ENCODE measurements at regions of chr4 and their contacts with region 1.

Region 1: DNA sequence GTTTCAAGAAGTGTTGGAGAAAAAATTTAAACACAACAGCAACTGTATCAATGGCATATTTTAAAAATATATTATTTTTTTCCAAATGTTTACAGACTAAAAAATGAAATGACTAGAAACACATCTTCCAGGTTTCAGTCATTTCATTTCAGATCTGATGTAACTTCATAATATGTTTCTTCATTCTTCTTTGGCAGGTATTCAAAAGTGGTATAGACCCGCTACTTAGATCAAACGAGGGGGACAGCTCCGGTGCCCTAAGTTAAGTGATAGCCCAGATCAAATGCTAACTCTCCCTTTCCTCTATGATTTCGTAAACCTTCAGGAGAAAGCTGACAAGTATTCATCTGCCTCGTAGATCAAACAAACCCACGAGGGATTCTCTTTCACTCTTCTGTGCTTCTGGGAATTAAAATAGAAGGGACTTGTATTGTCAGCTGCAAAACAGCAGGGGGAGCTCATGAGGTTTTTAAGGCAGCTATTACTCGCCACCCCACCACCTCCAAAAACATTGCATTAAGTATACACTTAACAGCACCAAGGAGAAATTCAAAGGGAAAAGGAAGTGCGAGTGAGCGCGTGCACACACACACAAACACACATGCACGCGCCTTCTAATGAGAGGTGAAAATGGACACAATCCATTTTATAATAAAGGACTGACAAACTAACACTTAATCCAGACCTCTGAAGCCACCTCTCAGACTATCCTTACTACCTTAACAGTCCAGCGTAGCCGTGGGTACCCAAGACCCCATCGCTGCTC is 21.4 kb downstream of the HELT start:
- DNase-seq: peak; percentile 45
- ATAC-seq: peak; percentile 77 to 88

Region 2: DNA sequence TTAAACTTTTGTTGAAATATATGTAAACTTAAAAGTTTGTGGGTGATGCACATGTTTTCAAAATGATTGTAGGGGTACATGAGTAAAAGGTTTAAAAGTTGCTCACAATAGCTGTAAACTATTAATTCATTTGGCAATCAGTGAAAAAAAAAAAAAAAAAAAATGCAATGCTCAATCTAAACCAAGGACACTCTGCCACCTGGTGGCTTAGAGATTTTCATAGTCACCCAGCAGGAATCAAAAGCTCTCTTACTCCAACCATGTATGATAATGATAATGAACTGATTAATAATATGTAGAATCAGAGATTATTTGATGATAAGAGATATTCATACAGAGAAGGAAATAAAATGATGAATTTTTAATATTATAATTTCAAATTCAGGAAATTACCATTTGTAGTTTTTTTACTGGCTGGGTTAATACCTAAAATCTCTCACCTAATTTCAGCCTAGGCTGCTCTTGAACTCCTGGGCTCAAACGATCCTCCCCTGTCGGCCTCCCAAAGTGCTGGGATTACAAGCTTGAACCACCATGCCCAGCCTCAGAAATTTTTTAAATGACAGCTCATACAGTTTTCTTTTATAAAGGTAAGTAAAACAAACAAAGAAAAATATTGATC is 56.5 kb after region 1 on chr4:
- intact Hi-C with region 1: loop called (anchors 2 to 10 kb)
- DNase-seq: no peak
- ATAC-seq: peak in 1 of 2 donors; percentile 43

Region 3: DNA sequence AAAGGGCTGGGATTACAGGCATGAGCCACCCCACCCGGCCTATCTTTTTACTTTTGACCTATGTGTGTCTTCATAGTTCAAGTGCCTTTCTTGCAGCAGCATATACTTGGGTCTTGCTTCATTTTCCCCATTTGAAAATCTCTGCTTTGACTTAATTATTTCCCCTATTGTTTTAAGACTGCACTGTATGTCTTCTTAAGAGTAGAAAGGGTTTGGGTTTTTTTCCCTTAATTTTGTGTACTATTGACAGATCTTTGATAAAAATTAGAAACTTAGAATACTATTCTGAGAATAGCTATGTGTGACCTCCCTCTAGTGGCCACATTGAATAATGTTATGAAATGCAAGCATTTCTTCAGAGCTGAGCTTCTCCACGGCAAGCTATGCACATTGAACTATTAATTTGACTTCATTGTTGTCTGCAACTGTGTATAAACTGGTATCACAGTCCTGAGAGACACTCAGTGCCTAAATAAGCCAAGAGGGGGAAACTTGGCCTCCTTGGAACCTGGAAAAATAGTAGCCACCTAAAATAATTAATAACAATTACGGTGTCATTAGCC is 94.7 kb after region 1 on chr4:
- intact Hi-C with region 1: loop called in 1 of 2 experiments (anchors 1 kb)
- DNase-seq: no peak
- ATAC-seq: peak; percentile 54 to 68

Region 4: DNA sequence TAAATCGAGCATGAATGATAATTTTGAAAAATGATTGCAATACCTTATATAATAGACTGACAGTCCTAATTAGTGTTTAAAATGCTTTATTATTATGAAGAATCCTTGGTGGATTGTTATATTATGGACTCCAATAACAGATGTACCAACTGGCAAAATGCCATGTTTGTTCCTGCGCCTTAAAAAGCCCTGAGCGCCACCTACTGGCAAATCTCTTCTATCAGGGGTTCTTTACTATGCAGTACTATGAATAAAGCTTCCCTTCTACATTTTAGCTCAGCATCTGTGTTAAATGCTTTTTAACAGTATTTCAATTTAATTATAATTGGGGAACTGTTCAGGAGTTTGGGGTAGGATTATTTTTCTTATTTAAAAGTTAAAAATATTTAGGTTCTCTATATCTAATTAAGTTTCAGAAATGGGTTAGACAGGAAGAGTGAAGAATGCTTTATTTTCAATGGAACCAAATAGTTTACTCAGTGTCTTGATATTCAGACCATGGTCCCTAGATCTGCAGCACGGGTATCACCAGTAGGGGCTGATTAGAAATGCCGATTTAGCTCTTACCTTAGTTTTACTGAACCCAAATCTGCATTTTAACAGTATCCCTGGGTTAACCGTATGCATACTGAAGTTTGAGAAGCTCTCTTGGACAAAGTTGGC is 144.1 kb after region 1 on chr4:
- intact Hi-C with region 1: loop called in 1 of 2 experiments (anchors 10 kb)
- DNase-seq: peak; percentile 89
- ATAC-seq: peak; percentile 67 to 76